ENCODE measurements at regions of chr17 and their contacts with region 1.

Region 1: GRCh38 chr17:41665566-41666236 is 23.0 kb upstream of the EIF1 start:
- DNase-seq: no peak
- H3K4me3 ChIP-seq: peak overlapping the region; percentile 55
- CTCF ChIP-seq: peak; percentile 90

Region 2: DNA sequence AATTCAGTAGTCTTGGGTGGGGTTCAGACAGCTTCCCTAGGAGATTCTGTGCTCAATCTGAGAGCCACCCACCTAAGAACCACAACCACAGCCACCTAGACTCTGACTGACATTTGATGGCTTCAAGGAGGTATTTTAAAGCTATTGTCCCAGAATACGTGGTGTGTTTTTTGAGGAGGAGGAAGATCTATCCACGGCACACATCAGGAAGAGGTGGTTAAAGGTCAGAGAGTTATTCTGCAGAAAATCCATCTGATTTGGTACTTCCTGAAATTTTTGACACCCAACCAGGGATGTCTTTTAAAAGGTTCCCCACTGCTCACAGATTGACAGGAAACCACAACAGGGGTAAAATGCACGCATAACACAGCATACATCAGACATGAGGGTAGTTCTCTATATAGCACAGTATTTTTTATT is 1043.2 kb before region 1 on chr17:
- CTCF ChIA-PET with region 1: interaction called, 38 read pairs
- POLR2A ChIA-PET with region 1: no interaction called
- DNase-seq: no peak
- H3K4me3 ChIP-seq: no peak overlapping the region
- CTCF ChIP-seq: no peak

Region 3: GRCh38 chr17:40818733-40819527 is 846.8 kb before region 1 on chr17:
- CTCF ChIA-PET with region 1: interaction called, 22 read pairs
- POLR2A ChIA-PET with region 1: no interaction called
- DNase-seq: no peak
- H3K4me3 ChIP-seq: peak overlapping the region; percentile 71
- CTCF ChIP-seq: no peak

Region 4: DNA sequence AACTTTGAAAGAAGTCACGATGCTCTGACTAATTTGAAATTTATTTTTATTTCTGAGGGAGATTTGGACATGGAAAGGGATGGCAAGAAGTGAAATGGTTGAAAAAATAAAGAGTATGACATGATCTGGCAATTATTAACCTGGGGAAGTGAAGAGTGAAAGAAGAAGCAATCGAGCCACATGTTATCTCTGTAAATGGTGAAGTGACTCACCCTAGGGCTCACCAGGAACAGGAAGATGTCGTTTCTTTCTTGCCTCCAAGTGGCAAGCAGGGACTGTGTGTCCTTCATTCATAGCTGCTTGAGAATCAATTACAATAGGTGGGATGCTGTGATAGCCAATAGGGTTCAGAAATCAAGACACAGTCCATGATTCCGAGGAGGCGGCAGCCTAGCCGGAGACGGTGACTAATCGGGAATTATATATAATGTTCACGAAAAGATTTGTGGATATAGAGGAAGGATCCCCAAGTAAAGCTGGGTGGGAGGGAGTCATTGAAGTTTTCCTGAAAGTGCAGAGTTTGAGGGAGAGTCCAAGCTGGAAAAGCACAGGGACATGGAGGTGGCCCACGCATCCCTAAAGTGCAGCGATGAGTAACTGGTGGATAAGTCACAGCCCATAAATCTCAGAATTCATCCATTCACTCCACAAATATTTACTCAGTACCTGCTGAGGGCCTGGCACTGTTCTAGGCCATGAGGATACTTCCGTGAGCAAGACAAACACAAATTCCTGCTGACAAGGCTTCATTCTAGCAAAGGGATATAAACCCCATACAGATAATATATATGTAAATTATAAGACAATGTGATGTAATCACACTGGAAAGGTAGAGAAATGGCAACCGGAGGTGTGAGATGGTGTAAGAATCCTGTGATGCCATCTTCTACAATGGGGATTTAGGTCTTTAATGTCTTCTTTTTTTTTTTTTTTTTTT is 762.3 kb before region 1 on chr17:
- CTCF ChIA-PET with region 1: interaction called, 39 read pairs
- POLR2A ChIA-PET with region 1: no interaction called
- DNase-seq: no peak
- H3K4me3 ChIP-seq: peak overlapping the region; percentile 2
- CTCF ChIP-seq: no peak

Region 5: GRCh38 chr17:41474863-41475262 is 190.8 kb before region 1 on chr17:
- CTCF ChIA-PET with region 1: no interaction called
- POLR2A ChIA-PET with region 1: no interaction called
- DNase-seq: no peak
- H3K4me3 ChIP-seq: no peak overlapping the region
- CTCF ChIP-seq: no peak

Region 6: DNA sequence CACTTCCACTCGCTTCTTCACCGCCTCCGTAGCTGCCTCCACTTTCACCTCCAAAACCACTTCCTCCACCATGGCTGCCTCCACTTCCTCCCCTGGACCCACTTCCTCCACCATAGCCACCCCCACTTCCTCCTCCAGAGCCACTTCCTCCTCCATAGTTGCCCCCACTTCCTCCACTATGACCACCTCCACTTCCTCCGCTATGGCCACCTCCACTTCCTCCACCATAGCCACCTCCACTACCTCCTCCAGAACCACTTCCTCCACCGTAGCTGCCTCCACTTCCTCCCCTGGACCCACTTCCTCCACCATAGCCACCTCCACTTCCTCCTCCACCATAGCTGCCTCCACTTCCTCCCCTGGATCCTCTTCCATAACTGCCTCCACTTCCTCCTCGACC is 98.4 kb before region 1 on chr17:
- CTCF ChIA-PET with region 1: interaction called, 604 read pairs
- POLR2A ChIA-PET with region 1: no interaction called
- DNase-seq: no peak
- H3K4me3 ChIP-seq: no peak overlapping the region
- CTCF ChIP-seq: no peak

Region 7: DNA sequence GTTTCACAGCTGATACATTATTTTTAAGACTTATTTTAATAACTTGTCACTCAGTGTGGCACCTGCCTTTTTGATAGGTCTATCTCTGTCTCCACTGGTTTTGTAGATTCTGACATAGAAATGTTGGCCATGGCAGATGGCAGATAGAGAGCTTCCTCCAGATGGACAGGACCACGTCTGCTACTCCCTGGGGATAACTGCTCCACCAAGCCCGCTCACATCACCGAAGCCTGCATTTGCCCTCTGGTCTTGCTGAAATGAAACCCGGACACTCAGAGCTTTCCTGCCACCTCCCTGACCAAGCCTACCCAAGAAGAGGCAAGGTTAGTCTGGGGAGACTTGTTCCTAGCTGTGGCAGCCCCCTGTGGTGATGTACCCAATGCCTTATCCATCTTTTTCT is 85.2 kb after region 1 on chr17:
- CTCF ChIA-PET with region 1: no interaction called
- POLR2A ChIA-PET with region 1: no interaction called
- DNase-seq: no peak
- H3K4me3 ChIP-seq: no peak overlapping the region
- CTCF ChIP-seq: no peak